ENCODE measurements at regions of chr1 and their contacts with region 1.

Region 1: DNA sequence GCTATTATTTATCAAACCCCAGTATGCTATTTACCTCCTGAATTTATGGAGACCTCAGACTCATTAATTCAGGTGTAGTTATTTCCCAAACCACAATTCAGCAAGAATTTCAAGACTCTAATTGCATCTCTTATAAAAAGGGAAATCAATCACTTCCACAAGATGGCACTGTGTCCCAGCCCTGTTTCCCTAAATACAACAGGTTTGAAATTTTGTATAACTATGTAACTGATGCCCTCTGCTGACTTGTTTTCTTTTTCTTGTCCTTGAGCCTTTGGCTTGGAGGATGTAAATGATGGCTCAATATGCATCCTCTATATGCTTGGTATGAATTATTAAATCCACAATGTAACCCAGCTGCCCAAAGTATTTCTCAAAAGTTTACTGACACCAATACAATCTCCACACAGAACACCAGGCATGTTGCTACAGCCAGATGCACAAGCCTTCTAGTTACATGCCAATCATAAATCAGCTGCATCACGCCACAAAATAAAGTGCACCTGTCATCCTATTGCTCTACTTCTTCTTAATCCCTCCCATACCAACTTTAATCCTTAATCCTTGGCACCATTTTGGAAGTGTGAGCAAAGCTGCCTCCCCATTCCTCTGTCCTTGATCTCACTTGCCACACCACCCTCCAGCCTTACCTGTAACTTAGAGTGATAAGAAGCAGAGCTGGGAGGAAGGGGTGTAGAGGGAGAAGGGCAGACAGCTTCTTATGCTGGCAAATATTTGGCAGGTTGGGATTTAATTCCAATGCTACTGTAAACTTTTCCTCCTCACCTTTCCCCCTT is 9.0 kb downstream of the C1orf105 start:
- DNase-seq: peak in 4 of 5 donors; percentile 14 to 58 (median 50)
- H3K4me3 ChIP-seq: no peak overlapping the region
- H3K4me3 Mint-ChIP-seq: no peak overlapping the region
- H3K27ac ChIP-seq: no peak overlapping the region
- H3K27ac Mint-ChIP-seq: peak overlapping the region in 4 of 8 donors; percentile 18 to 57 (median 26)
- H3K4me1 ChIP-seq: peaks cover 66% of the 10 kb centered on the region
- H3K4me1 Mint-ChIP-seq: peaks cover 19 to 44% (median 38%) of the 10 kb centered on the region in 3 donors
- H3K27me3 ChIP-seq: no peaks in the 10 kb centered on the region
- H3K27me3 Mint-ChIP-seq: no peaks in the 10 kb centered on the region

Region 2: DNA sequence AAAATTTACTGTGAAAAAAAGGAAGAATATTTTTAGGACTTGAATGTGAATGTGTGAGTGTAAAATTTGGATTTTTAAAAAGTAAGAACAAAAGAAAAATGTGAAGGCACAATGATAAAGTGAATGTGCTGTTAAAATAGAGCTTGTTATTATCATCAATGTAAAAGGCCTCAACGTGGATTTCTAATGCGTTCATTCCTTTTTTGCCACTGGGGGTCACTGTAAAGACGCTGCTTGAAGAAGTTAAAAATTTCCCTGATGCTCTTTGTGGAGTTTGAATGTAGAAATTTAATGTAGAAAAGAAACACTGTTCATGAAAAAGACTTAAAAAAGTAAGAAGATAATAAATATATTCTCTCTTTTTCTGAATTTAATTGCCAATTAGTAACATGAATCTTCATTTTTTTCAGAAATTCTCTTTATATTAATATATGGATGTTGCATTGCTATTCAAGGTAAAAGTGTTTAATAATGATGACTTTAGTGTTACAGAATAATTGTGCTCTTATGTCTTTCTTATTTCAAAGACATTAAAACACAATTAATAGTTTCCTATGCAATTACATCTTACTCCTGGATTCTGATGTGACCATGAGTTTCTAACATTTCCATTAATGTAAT is 426.7 kb before region 1 on chr1:
- CTCF ChIA-PET with region 1: interaction called, 10 read pairs
- POLR2A ChIA-PET with region 1: interaction called, 4 read pairs
- DNase-seq: peak in 2 of 5 donors; percentile 10 to 31
- H3K4me3 ChIP-seq: no peak overlapping the region
- H3K4me3 Mint-ChIP-seq: no peak overlapping the region
- H3K27ac ChIP-seq: no peak overlapping the region
- H3K27ac Mint-ChIP-seq: no peak overlapping the region
- H3K4me1 ChIP-seq: no peaks in the 10 kb centered on the region
- H3K4me1 Mint-ChIP-seq: peaks cover 3 to 19% (median 16%) of the 10 kb centered on the region in 3 donors
- H3K27me3 ChIP-seq: no peaks in the 10 kb centered on the region
- H3K27me3 Mint-ChIP-seq: no peaks in the 10 kb centered on the region

Region 3: GRCh38 chr1:172443626-172444453 is 14.3 kb after region 1 on chr1 and contains the start of gene PIGC:
- CTCF ChIA-PET with region 1: interaction called, 55 read pairs
- POLR2A ChIA-PET with region 1: interaction called, 3 read pairs
- DNase-seq: peak; percentile 83 to 93 (median 87)
- H3K4me3 ChIP-seq: peak within 1 kb of the TSS; percentile 75
- H3K4me3 Mint-ChIP-seq: peak within 1 kb of the TSS; percentile 92 to 97 (median 94)
- H3K27ac ChIP-seq: peak within 1 kb of the TSS; percentile 81
- H3K27ac Mint-ChIP-seq: peak within 1 kb of the TSS; percentile 82 to 97 (median 93)
- H3K4me1 ChIP-seq: peaks cover 26% of the 10 kb centered on the region
- H3K4me1 Mint-ChIP-seq: peaks cover 42 to 50% (median 46%) of the 10 kb centered on the region in 3 donors
- H3K27me3 ChIP-seq: no peaks in the 10 kb centered on the region
- H3K27me3 Mint-ChIP-seq: peaks cover 0 to 2% of the 10 kb centered on the region in 2 donors
- total RNA-seq, gene PIGC: 26.4 to 27.8 TPM